ENCODE measurements at regions of chr10 and their contacts with region 1.

Region 1: DNA sequence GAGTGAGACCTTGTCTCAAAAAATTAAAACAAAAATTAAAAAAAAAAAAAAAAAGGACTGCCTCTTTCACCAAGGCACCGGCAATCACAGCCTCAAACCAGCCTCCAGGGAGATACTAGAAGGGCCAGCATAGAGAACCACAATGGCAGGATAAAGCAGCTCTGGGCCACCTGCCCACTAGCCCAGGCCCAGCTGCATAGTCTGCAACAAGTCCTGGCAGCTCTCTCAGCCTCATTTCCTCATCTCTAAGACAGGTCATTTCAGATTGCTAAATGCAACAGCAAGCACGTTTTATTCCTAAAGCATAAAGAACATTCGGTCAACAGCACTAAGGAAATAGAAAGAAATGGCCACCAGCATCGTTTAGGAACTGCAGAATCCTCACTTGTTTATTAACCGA is 28.8 kb downstream of the XPNPEP1 start:
- DNase-seq: no peak
- ATAC-seq: no peak
- H3K4me3 ChIP-seq: no peak overlapping the region
- H3K4me3 Mint-ChIP-seq: no peak overlapping the region
- H3K27ac ChIP-seq: no peak overlapping the region
- H3K27ac Mint-ChIP-seq: no peak overlapping the region
- H3K4me1 ChIP-seq: peaks cover 0 to 9% of the 10 kb centered on the region in 2 experiments
- H3K4me1 Mint-ChIP-seq: peaks cover 35 to 60% (median 56%) of the 10 kb centered on the region in 3 donors
- H3K27me3 ChIP-seq: no peaks in the 10 kb centered on the region
- H3K27me3 Mint-ChIP-seq: no peaks in the 10 kb centered on the region

Region 2: DNA sequence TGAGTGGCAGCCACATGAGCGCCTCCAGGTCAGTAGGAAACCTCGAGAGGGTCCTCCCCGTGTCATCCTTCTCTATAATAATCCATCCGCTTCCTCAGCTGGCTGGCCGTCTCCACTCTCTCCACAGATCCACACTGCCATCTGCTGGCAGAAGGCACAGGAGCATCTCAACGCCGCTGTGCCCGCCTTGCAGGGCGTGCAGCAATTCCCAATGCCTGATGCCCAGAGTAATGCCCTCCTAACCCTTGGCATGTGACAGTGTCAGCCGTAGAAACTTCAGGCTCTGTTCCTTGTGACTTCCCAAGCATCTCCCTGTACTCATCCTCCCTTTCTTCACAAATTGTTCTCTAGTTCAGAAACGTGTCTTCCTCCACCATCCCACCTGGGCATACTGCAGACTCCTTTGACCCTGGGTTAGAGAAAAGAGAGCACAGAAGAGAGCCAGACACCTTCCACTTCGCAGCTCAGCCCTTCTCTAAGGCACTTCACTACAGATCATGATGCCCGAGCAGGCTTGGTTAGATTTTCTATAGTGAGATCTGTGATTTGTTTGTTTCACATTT is 42.0 kb before region 1 on chr10:
- CTCF ChIA-PET with region 1: no interaction called
- POLR2A ChIA-PET with region 1: interaction called in 1 of 2 experiments, 12 read pairs
- DNase-seq: peak; percentile 27 to 78 (median 60)
- ATAC-seq: peak; percentile 72 to 86 (median 78)
- H3K4me3 ChIP-seq: no peak overlapping the region
- H3K4me3 Mint-ChIP-seq: peak overlapping the region in 1 of 3 donors; percentile 54
- H3K27ac ChIP-seq: no peak overlapping the region
- H3K27ac Mint-ChIP-seq: no peak overlapping the region
- H3K4me1 ChIP-seq: peaks cover 0 to 11% of the 10 kb centered on the region in 2 experiments
- H3K4me1 Mint-ChIP-seq: peaks cover 17 to 19% (median 18%) of the 10 kb centered on the region in 3 donors
- H3K27me3 ChIP-seq: peaks cover 0 to 4% of the 10 kb centered on the region in 2 experiments
- H3K27me3 Mint-ChIP-seq: peaks cover 0 to 4% of the 10 kb centered on the region in 2 donors

Region 3: GRCh38 chr10:109914966-109915365 is 20.4 kb after region 1 on chr10:
- CTCF ChIA-PET with region 1: interaction called, 4 to 13 read pairs
- POLR2A ChIA-PET with region 1: interaction called in 1 of 2 experiments, 5 read pairs
- DNase-seq: peak in 22 of 35 experiments; percentile 19 to 77 (median 32)
- ATAC-seq: peak; percentile 97 to 98 (median 98)
- H3K4me3 ChIP-seq: no peak overlapping the region
- H3K4me3 Mint-ChIP-seq: peak overlapping the region; percentile 37 to 62 (median 52)
- H3K27ac ChIP-seq: peak overlapping the region; percentile 48
- H3K27ac Mint-ChIP-seq: peak overlapping the region; percentile 85 to 92
- H3K4me1 ChIP-seq: peaks cover 21 to 46% of the 10 kb centered on the region in 2 experiments
- H3K4me1 Mint-ChIP-seq: peaks cover 80 to 94% (median 88%) of the 10 kb centered on the region in 3 donors
- H3K27me3 ChIP-seq: no peaks in the 10 kb centered on the region
- H3K27me3 Mint-ChIP-seq: no peaks in the 10 kb centered on the region

Region 4: GRCh38 chr10:110110338-110110737 is 215.8 kb after region 1 on chr10:
- CTCF ChIA-PET with region 1: interaction called in 1 of 2 experiments, 4 read pairs
- POLR2A ChIA-PET with region 1: interaction called in 1 of 2 experiments, 10 read pairs
- DNase-seq: no peak
- ATAC-seq: no peak
- H3K4me3 ChIP-seq: no peak overlapping the region
- H3K4me3 Mint-ChIP-seq: no peak overlapping the region
- H3K27ac ChIP-seq: peak overlapping the region; percentile 1
- H3K27ac Mint-ChIP-seq: peak overlapping the region; percentile 73 to 84
- H3K4me1 ChIP-seq: peaks cover 0 to 2% of the 10 kb centered on the region in 2 experiments
- H3K4me1 Mint-ChIP-seq: peaks cover 39 to 47% (median 40%) of the 10 kb centered on the region in 3 donors
- H3K27me3 ChIP-seq: no peaks in the 10 kb centered on the region
- H3K27me3 Mint-ChIP-seq: no peaks in the 10 kb centered on the region

Measured in T-cell (primary cell).